Activated naive CD4-positive, alpha-beta T cell treated with anti-CD3 and anti-CD28 coated beads, Interleukin-2, amount 10 ng/mL, durations not matched to agents 7 days and 5 days (primary cell): ENCODE measurements at regions of chr9 and their contacts with region 1.

Region 1: GRCh38 chr9:128094166-128094967 is 26.3 kb downstream of the SLC25A25 start:
- DNase-seq: peak; percentile 86
- H3K4me3 Mint-ChIP-seq: peak overlapping the region; percentile 34
- H3K27ac Mint-ChIP-seq: peak overlapping the region; percentile 91
- H3K4me1 Mint-ChIP-seq: peaks cover 68% of the 10 kb centered on the region
- H3K27me3 Mint-ChIP-seq: no peaks in the 10 kb centered on the region

Region 2: DNA sequence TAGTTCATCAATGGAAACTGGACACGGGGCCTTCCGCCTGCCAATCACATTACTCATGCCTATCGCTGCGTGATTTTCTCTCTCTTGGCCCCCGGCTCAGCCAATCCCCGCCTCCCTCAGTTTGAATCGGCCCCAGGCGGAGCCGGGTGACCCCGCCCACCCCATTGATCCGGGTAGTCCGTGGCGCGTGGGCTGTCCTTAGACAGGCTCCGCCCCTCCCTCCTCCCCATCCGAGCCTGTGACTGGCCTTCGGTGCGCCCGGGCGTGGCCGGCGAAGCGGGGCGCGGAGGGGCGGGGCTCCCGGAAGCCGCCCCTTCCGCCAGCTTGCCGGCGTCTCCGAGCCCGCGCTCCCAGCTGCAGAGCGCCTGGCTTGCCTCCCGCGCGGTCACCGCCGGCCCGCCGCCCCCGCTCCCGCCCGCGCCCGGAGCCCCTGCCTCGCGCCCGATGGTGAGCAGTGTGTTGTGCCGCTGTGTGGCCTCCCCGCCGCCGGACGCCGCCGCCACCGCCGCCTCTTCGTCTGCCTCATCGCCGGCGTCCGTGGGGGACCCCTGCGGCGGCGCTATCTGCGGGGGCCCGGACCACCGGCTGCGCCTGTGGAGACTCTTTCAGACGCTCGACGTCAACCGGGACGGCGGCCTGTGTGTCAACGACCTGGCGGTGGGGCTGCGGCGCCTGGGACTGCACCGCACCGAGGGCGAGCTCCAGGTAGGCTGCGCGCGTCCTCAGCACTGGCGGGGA is 26.3 kb before region 1 on chr9 and contains the start of gene SLC25A25:
- CTCF ChIA-PET with region 1: interaction called, 10 read pairs
- DNase-seq: peak; percentile 100
- H3K4me3 Mint-ChIP-seq: peak within 1 kb of the TSS; percentile 98
- H3K27ac Mint-ChIP-seq: peak within 1 kb of the TSS; percentile 85
- H3K4me1 Mint-ChIP-seq: peaks cover 66% of the 10 kb centered on the region
- H3K27me3 Mint-ChIP-seq: no peaks in the 10 kb centered on the region

Region 3: GRCh38 chr9:128159784-128160602 is 65.6 kb after region 1 on chr9 and contains the start of gene BBLN:
- CTCF ChIA-PET with region 1: no interaction called
- DNase-seq: peak; percentile 95
- H3K4me3 Mint-ChIP-seq: peak within 1 kb of the TSS; percentile 78
- H3K27ac Mint-ChIP-seq: peak within 1 kb of the TSS; percentile 93
- H3K4me1 Mint-ChIP-seq: peaks cover 24% of the 10 kb centered on the region
- H3K27me3 Mint-ChIP-seq: peaks cover 4% of the 10 kb centered on the region